ENCODE measurements at regions of chr22 and their contacts with region 1.

Region 1: GRCh38 chr22:34111210-34111824 is 191.0 kb upstream of the LARGE1 start:
- DNase-seq: peak in 4 of 14 experiments; percentile 4 to 14 (median 8)
- ATAC-seq: no peak
- H3K4me3 ChIP-seq: no peak overlapping the region
- H3K4me3 Mint-ChIP-seq: no peak overlapping the region
- H3K27ac ChIP-seq: no peak overlapping the region
- H3K27ac Mint-ChIP-seq: no peak overlapping the region
- H3K4me1 ChIP-seq: no peaks in the 10 kb centered on the region
- H3K4me1 Mint-ChIP-seq: no peaks in the 10 kb centered on the region
- H3K27me3 ChIP-seq: no peaks in the 10 kb centered on the region
- H3K27me3 Mint-ChIP-seq: no peaks in the 10 kb centered on the region
- CTCF ChIP-seq: peak; percentile 45

Region 2: DNA sequence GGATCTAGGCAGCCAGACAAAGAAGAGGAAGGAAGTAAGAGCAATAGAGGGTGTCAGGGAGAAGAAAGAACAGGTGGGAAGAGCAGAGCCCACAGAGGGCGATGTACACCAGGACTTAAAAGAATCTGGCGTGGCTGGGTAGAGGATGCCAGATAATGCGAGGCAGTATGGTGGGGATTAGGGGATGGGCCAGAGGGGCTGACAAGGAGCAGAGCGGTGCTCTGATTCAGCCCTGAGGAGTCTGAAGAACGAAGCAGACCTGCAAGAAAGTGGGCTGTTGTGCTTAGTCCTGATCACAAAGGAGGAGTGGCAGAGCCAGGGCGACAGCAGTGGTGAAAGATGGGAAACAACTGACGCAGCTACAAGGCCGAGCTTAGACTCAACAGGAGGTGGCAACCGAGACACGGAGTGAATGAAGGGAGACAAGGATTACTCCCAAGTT is 354.8 kb before region 1 on chr22:
- CTCF ChIA-PET with region 1: no interaction called
- POLR2A ChIA-PET with region 1: no interaction called
- intact Hi-C with region 1: no loop called
- DNase-seq: no peak
- ATAC-seq: no peak
- H3K4me3 ChIP-seq: no peak overlapping the region
- H3K4me3 Mint-ChIP-seq: no peak overlapping the region
- H3K27ac ChIP-seq: no peak overlapping the region
- H3K27ac Mint-ChIP-seq: no peak overlapping the region
- H3K4me1 ChIP-seq: no peaks in the 10 kb centered on the region
- H3K4me1 Mint-ChIP-seq: no peaks in the 10 kb centered on the region
- H3K27me3 ChIP-seq: peaks cover 0 to 2% of the 10 kb centered on the region in 2 experiments
- H3K27me3 Mint-ChIP-seq: no peaks in the 10 kb centered on the region
- CTCF ChIP-seq: no peak

Region 3: DNA sequence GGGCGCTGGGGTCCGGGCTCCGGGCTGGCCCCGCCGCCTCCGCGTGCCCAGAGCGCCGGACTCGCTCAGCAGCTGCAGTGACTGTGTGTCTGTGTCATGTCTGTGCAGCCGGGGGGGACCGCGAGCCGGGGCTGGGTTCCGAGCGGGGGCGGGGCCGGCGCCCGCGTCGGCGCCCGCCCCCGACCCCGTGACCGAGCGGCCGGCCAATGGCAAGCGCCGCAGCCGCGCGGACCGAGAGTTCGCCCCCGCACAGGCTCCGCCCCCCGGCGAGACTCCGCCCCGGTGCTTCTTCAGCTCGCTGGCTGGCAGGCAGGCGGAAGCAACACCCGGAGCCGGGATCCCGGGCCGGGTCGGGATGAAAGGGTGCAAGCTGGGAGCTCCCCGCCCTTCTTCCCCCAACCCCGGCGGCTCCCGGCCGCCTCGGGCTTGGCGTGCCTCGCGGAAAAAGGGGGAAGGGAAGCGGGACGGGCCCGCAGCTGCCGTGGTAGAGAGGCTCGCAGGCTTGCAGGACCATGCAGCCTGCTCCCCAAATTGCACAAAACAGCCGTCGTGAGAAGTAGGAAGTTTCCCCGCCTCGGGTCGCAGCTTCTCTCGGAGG is 190.3 kb before region 1 on chr22:
- CTCF ChIA-PET with region 1: no interaction called
- POLR2A ChIA-PET with region 1: no interaction called
- intact Hi-C with region 1: loop called in 1 of 2 experiments (anchors 5 kb)
- DNase-seq: peak; percentile 65 to 90 (median 79)
- ATAC-seq: peak; percentile 90
- H3K4me3 ChIP-seq: peak overlapping the region; percentile 56
- H3K4me3 Mint-ChIP-seq: peak overlapping the region; percentile 83
- H3K27ac ChIP-seq: no peak overlapping the region
- H3K27ac Mint-ChIP-seq: no peak overlapping the region
- H3K4me1 ChIP-seq: peaks cover 24% of the 10 kb centered on the region
- H3K4me1 Mint-ChIP-seq: peaks cover 24% of the 10 kb centered on the region
- H3K27me3 ChIP-seq: peaks cover 40 to 45% of the 10 kb centered on the region in 2 experiments
- H3K27me3 Mint-ChIP-seq: peaks cover 77% of the 10 kb centered on the region
- CTCF ChIP-seq: no peak